ENCODE measurements at regions of chr14 and their contacts with region 1.

Region 1: DNA sequence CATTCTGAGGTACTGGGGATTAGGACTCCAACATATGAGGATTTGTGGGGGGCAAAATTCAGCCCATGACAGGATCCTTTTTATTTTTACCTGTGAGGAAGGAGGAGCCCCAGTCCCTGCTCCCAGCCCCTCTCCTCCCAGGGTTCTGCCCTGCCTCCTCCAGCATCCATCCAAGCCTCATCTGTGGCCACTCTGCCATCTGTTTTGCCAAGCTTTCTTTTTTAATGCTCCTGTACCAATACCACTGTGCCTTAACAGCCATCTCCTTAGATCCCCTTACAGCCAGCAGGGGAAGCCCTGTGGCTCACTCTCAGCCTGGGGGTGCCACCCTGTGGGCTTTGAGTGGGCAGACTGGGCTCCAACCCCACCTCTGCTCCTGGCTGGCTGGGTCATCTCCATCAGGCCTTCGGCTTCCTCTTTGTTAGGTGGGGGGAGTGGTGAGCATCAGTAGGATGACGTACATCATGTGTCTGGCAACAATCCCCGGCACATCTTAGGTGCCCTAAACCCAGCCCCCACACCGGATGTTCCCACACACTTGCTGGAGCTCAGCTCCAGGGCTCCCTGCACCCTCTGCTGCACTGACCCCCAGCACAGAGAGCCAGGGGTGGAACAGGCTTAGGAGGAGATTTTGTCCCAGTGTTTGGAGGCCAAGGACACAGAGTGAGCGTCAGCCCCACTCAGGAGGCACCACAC is 40.2 kb downstream of the CYP46A1 start:
- DNase-seq: no peak
- H3K4me3 ChIP-seq: no peak overlapping the region
- H3K27ac ChIP-seq: no peak overlapping the region
- H3K4me1 ChIP-seq: no peaks in the 10 kb centered on the region
- H3K27me3 ChIP-seq: peaks cover 10% of the 10 kb centered on the region

Region 2: GRCh38 chr14:99579903-99580570 is 144.3 kb before region 1 on chr14:
- in situ Hi-C with region 1: no loop called
- DNase-seq: peak; percentile 45
- H3K4me3 ChIP-seq: no peak overlapping the region
- H3K27ac ChIP-seq: no peak overlapping the region
- H3K4me1 ChIP-seq: peaks cover 25% of the 10 kb centered on the region
- H3K27me3 ChIP-seq: no peaks in the 10 kb centered on the region

Region 3: DNA sequence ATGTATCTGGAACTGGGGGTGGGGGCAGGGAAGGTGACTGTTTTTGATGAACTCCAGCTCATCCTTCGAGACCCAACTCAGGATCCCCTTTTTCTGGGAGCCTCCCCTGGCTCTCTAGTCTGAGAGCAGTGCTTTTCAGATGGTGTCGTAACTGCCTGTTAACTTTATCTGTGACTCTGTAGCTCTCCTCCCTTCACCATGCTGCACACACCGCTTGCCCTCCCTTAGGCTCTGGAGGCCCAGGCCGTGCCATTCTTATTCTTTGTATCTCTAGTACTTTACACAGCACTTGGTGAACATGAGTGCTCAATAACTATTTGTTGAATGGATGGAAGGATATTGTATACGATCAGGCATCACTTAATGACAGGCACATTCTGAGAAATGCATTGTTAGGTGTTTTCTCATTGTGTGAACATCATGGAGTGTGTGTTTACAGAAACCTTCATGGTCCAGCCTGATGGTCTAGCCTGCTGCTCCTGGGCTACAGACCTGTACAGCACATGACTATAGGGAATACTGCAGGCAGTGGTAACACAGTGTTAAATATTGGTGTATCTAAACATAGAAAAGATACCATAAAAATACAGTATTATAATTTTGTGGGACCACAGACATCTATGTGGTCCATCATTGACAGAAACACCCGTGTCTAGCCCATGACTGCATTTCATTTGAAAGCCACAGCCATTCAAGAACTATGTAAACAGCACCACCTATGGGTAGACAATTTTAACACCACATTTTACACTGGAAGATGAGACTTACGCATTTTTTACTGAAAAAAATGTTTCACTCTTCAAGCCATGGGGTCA is 160.7 kb after region 1 on chr14:
- in situ Hi-C with region 1: loop called (anchors 5 kb)
- DNase-seq: peak; percentile 79
- H3K4me3 ChIP-seq: no peak overlapping the region
- H3K27ac ChIP-seq: no peak overlapping the region
- H3K4me1 ChIP-seq: peaks cover 16% of the 10 kb centered on the region
- H3K27me3 ChIP-seq: no peaks in the 10 kb centered on the region